ENCODE measurements at regions of chrX and their contacts with region 1.

Region 1: GRCh38 chrX:38175140-38175539 is 45.5 kb downstream of the SRPX start:
- DNase-seq: peak; percentile 28 to 51 (median 36)
- ATAC-seq: peak; percentile 87
- H3K4me3 ChIP-seq: no peak overlapping the region
- H3K27ac ChIP-seq: no peak overlapping the region
- H3K4me1 ChIP-seq: no peaks in the 10 kb centered on the region
- H3K27me3 ChIP-seq: no peaks in the 10 kb centered on the region; a peak in 2 of 5 replicates
- CTCF ChIP-seq: peak; percentile 60 to 77 (median 68)
- EP300 ChIP-seq: no peak
- POLR2A ChIP-seq: no peak
- RAD21 ChIP-seq: peak; percentile 70 to 81

Region 2: GRCh38 chrX:37509349-37509748 is 665.8 kb before region 1 on chrX:
- CTCF ChIA-PET with region 1: no interaction called
- POLR2A ChIA-PET with region 1: no interaction called
- in situ Hi-C with region 1: loop called (anchors 25 kb)
- intact Hi-C with region 1: loop called (anchors 10 kb)
- DNase-seq: peak in 1 of 4 experiments; percentile 8
- ATAC-seq: peak; percentile 77
- H3K4me3 ChIP-seq: no peak overlapping the region
- H3K27ac ChIP-seq: no peak overlapping the region
- H3K4me1 ChIP-seq: peaks cover 0 to 3% of the 10 kb centered on the region in 2 experiments; a peak in 1 of 5 replicates
- H3K27me3 ChIP-seq: no peaks in the 10 kb centered on the region
- CTCF ChIP-seq: peak; percentile 15 to 42 (median 40); a peak in 3 of 6 replicates
- EP300 ChIP-seq: no peak
- POLR2A ChIP-seq: no peak
- RAD21 ChIP-seq: peak; percentile 33 to 60

Region 3: DNA sequence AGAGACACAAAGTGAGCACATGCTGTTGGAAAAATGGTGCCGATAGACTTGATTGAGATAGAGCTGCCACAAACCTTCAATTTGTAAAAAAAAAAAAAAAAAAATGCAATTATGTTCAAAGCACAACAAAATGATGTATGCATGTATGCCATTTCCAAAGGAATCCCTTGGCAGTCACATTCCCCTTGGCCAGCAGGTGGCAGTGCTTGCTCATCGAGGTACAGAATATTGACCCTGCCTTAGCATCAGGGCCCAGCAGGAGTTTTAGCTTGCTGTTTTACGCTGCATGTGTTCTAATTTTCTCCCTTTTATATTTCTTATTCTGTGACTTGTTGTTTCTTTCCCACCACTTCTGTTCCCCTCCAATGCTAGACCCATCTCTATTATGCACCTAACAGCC is 429.8 kb before region 1 on chrX:
- CTCF ChIA-PET with region 1: interaction called, 3 read pairs
- POLR2A ChIA-PET with region 1: interaction called, 3 read pairs
- in situ Hi-C with region 1: loop called (anchors 25 kb)
- intact Hi-C with region 1: loop called (anchors 1 kb)
- DNase-seq: peak; percentile 54 to 72 (median 68)
- ATAC-seq: peak; percentile 95
- H3K4me3 ChIP-seq: no peak overlapping the region
- H3K27ac ChIP-seq: no peak overlapping the region
- H3K4me1 ChIP-seq: no peaks in the 10 kb centered on the region
- H3K27me3 ChIP-seq: no peaks in the 10 kb centered on the region
- CTCF ChIP-seq: peak; percentile 76 to 80 (median 80)
- EP300 ChIP-seq: no peak
- POLR2A ChIP-seq: no peak
- RAD21 ChIP-seq: peak; percentile 85 to 89

Region 4: DNA sequence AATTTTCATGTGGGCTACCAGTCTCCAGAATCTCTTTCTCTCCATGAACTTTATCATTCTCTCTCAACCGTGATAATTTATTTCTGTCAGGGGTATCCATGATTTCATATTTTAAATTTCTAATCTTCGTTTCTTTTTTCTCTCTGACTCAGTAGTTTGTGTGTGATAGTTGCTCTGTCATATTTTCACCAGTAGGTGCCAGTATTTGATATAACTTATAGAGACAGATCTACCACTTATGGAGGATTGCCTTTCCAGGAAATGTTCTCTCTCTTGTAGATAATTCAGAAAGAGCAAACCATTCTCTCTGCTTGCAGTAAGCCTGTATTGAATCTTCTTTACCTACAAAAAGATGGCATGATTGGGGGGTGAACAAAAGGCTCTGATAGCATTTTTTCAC is 248.4 kb before region 1 on chrX:
- CTCF ChIA-PET with region 1: interaction called, 3 read pairs
- POLR2A ChIA-PET with region 1: no interaction called
- in situ Hi-C with region 1: loop called (anchors 10 kb)
- intact Hi-C with region 1: loop called (anchors 2 kb)
- DNase-seq: peak; percentile 12 to 26 (median 16)
- ATAC-seq: peak; percentile 59; the same call in 1 of the 3 replicates
- H3K4me3 ChIP-seq: no peak overlapping the region
- H3K27ac ChIP-seq: no peak overlapping the region
- H3K4me1 ChIP-seq: no peaks in the 10 kb centered on the region
- H3K27me3 ChIP-seq: no peaks in the 10 kb centered on the region
- CTCF ChIP-seq: peak in 2 of 3 experiments; percentile 13 to 54; a peak in 2 of 6 replicates
- EP300 ChIP-seq: no peak
- POLR2A ChIP-seq: no peak
- RAD21 ChIP-seq: peak; percentile 45 to 67

Region 5: DNA sequence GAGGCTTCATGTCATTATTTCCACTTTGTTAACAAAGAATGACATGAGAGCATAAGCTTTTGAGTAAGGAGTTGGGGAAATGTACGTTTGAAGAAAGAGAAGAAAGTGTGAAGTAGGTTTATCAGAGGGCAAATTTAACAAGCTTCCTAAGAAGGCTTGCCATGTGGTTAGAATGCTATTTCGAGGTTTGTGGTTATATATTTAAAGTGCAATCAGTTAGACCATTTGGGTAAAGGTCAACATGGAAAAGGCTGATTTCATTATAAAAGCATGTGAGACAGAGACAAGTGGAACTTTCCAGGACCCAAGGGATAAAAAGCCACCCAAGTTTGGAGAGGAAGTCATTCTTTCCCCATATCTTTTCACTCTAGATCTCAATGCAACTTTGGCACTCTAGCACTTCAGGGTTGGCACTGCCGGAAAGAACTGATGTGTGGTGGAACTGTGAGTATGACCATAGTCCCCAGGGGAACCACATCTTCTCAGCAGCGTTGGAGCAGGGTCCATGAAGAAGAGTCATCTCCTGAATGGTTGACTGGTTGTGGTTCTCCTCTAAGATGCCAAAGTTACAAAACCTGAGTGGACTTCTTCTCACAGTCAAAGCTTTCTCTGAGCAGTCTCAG is 1156.1 kb after region 1 on chrX:
- CTCF ChIA-PET with region 1: no interaction called
- POLR2A ChIA-PET with region 1: no interaction called
- in situ Hi-C with region 1: no loop called
- intact Hi-C with region 1: no loop called
- DNase-seq: no peak
- ATAC-seq: no peak
- H3K4me3 ChIP-seq: no peak overlapping the region
- H3K27ac ChIP-seq: no peak overlapping the region
- H3K4me1 ChIP-seq: no peaks in the 10 kb centered on the region
- H3K27me3 ChIP-seq: no peaks in the 10 kb centered on the region; a peak in 1 of 5 replicates
- CTCF ChIP-seq: no peak
- EP300 ChIP-seq: no peak
- POLR2A ChIP-seq: no peak
- RAD21 ChIP-seq: no peak

Measured in K562 (cell line).